WTC11 (cell line): ENCODE measurements at regions of chr7 and their contacts with region 1.

Region 1: GRCh38 chr7:98569691-98570337 is 47.3 kb upstream of the NPTX2 start:
- DNase-seq: no peak
- ATAC-seq: no peak
- H3K4me3 Mint-ChIP-seq: no peak overlapping the region
- H3K27ac Mint-ChIP-seq: no peak overlapping the region
- H3K4me1 Mint-ChIP-seq: peaks cover 5% of the 10 kb centered on the region; the same call in 1 of the 2 replicates
- H3K27me3 Mint-ChIP-seq: peaks cover 9% of the 10 kb centered on the region; the same call in 1 of the 2 replicates
- CTCF ChIP-seq: no peak

Region 2: GRCh38 chr7:99918959-99919813 is 1349.4 kb after region 1 on chr7 and contains the start of gene TRIM4:
- CTCF ChIA-PET with region 1: no interaction called
- POLR2A ChIA-PET with region 1: interaction called, 11 read pairs
- DNase-seq: peak; percentile 62
- ATAC-seq: peak; percentile 94
- H3K4me3 Mint-ChIP-seq: peak within 1 kb of the TSS; percentile 72
- H3K27ac Mint-ChIP-seq: peak within 1 kb of the TSS; percentile 89
- H3K4me1 Mint-ChIP-seq: peaks cover 7% of the 10 kb centered on the region
- H3K27me3 Mint-ChIP-seq: peaks cover 3% of the 10 kb centered on the region
- CTCF ChIP-seq: no peak
- total RNA-seq, gene TRIM4: 6.6 to 9.8 TPM (median 9.3 TPM) in 3 replicates